Panc1 (cell line): ENCODE measurements at regions of chr10 and their contacts with region 1.

Region 1: DNA sequence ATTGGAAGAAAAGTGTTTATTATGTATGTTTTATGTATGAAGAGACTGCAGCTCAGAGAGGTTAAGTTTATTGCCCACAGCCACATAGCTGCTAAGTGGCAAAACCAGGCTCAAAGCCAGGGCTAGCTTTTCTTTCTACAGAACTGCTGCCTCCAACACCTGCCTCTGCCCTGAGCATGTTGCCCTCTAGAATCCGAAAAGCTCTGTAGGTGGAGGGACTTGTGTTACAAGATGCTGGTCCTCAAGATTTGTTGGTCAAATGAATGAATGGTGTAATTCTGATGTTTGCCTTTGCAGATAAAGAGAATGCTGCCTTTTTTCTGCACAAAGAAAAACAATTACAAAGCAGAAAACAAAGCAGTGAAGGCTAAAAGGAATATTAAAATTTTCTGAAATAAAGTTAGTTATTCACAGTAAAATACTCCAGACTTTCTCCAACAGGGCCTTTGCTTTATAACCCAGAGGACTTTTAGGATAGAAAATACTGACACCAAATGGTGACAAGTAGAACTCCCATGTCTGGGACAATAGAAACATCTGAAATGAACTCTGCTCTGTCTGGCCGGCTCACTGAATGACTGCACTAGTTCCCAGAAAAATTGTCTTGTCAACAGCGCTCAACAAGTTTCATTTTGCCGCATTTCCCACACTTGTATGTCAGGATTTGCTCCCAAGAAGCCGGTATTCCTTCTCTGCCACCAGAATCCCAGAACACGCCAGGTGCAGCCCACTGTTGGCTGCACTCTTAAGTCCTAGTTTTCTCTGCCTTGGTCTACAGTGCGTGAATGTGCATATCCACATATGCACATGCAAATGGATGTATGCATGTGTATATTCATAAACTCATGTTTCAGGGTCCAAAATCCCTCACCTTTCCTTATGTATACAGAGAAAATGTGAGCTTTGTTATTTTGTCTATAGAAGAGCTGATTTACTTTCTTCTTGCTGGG is 11.0 kb upstream of the DNTT start:
- DNase-seq: peak; percentile 22
- ATAC-seq: peak; percentile 96
- H3K4me3 ChIP-seq: no peak overlapping the region
- H3K27ac ChIP-seq: no peak overlapping the region
- H3K4me1 ChIP-seq: no peaks in the 10 kb centered on the region
- H3K27me3 ChIP-seq: peaks cover 48% of the 10 kb centered on the region
- CTCF ChIP-seq: peak; percentile 72

Region 2: GRCh38 chr10:96229568-96230030 is 63.6 kb before region 1 on chr10:
- CTCF ChIA-PET with region 1: interaction called, 7 read pairs
- POLR2A ChIA-PET with region 1: no interaction called
- in situ Hi-C with region 1: no loop called
- intact Hi-C with region 1: loop called (anchors 2 kb)
- DNase-seq: peak; percentile 24
- ATAC-seq: peak; percentile 84
- H3K4me3 ChIP-seq: no peak overlapping the region
- H3K27ac ChIP-seq: no peak overlapping the region
- H3K4me1 ChIP-seq: no peaks in the 10 kb centered on the region
- H3K27me3 ChIP-seq: no peaks in the 10 kb centered on the region
- CTCF ChIP-seq: peak; percentile 98

Region 3: DNA sequence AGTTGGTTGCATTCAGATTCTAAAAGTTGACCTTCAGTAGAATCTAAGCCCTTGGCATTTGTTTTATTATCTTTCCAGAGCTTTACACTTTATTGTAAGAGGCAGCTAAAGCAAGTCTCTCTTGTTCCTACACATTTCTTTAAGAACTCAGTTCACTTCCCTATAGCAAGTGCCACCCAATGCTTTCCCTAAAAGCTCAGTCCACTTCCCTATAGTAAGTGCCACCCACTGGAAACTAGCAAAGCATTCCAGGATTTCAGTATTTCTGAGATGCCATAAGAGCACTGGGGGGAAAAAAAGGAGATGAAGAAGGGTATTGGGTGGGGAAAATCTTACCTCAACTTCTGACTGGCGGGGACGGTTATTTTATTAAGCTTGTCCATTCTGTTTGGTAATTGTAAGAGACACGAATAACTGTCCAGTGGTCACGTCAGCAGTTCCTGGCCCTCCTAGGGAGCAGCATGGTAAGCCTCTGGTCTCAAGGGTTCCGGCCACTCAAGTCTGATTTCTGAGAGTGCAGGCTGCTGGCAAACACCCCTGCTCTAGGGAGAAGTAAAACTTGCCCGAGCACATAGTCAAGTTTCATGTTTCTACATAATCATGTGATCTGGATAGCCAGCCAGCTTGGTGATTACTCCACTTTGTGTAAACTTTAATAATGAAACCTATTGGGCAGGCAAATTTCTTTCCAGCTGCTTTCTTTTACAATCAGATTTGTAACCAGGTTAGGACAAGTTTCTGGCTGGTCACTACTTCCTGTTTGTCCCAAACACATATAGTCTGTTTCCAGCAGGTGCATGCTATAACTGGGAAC is 22.0 kb before region 1 on chr10 and contains the start of gene BLNK:
- CTCF ChIA-PET with region 1: no interaction called
- POLR2A ChIA-PET with region 1: no interaction called
- in situ Hi-C with region 1: no loop called
- intact Hi-C with region 1: no loop called
- DNase-seq: no peak
- ATAC-seq: no peak
- H3K4me3 ChIP-seq: no peak within 1 kb of the TSS
- H3K27ac ChIP-seq: no peak within 1 kb of the TSS
- H3K4me1 ChIP-seq: no peaks in the 10 kb centered on the region
- H3K27me3 ChIP-seq: peaks cover 24% of the 10 kb centered on the region
- CTCF ChIP-seq: no peak
- total RNA-seq, gene BLNK: 0.10 TPM

Region 4: DNA sequence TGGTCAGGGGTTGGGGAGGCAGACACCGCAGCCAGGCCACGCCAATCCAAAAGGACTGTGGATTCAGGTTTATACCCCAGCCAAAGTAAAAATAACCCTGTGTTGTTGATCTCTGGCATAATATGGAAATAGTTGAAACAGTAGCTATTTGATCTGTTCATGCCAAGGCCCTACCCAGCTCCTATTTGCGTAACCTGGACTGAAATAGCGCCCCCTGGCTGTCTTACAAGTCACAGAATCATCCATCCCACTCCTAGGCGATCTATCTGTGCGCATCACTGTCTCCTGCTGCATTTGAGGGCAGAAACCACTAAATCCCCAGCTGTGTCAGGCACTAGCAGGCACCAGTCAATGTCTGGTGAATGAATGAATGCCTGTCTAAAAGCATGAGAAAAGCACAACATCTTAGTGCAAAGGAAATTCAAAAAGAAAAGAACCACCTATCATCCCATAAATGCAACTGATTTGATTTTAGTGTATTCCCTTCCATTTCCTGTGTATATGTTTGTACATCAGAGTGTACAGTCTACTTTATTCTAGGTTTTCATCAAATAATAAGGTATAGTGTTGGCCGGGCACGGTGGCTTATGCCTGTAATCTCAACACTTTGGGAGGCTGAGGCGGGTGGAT is 732.5 kb after region 1 on chr10:
- CTCF ChIA-PET with region 1: no interaction called
- POLR2A ChIA-PET with region 1: no interaction called
- in situ Hi-C with region 1: no loop called
- intact Hi-C with region 1: no loop called
- DNase-seq: no peak
- ATAC-seq: no peak
- H3K4me3 ChIP-seq: no peak overlapping the region
- H3K27ac ChIP-seq: 0 out of 2 replicates have a peak overlapping the region, but pooled peaks have one; percentile 73
- H3K4me1 ChIP-seq: peaks cover 26% of the 10 kb centered on the region
- H3K27me3 ChIP-seq: no peaks in the 10 kb centered on the region; the same call in 1 of the 2 replicates
- CTCF ChIP-seq: peak; percentile 87